ENCODE measurements at regions of chr1 and their contacts with region 1.

Region 1: GRCh38 chr1:23544444-23545389 is 13.7 kb upstream of the E2F2 start:
- DNase-seq: peak; percentile 87
- H3K4me3 ChIP-seq: no peak overlapping the region
- H3K27ac ChIP-seq: no peak overlapping the region
- H3K4me1 ChIP-seq: peaks cover 23% of the 10 kb centered on the region
- H3K27me3 ChIP-seq: no peaks in the 10 kb centered on the region

Region 2: GRCh38 chr1:23407016-23407634 is 137.6 kb before region 1 on chr1:
- in situ Hi-C with region 1: no loop called
- DNase-seq: peak; percentile 52
- H3K4me3 ChIP-seq: no peak overlapping the region
- H3K27ac ChIP-seq: no peak overlapping the region
- H3K4me1 ChIP-seq: peaks cover 44% of the 10 kb centered on the region
- H3K27me3 ChIP-seq: no peaks in the 10 kb centered on the region

Region 3: GRCh38 chr1:23643736-23644554 is 99.2 kb after region 1 on chr1:
- in situ Hi-C with region 1: loop called (anchors 5 kb)
- DNase-seq: no peak
- H3K4me3 ChIP-seq: no peak overlapping the region
- H3K27ac ChIP-seq: no peak overlapping the region
- H3K4me1 ChIP-seq: no peaks in the 10 kb centered on the region
- H3K27me3 ChIP-seq: no peaks in the 10 kb centered on the region